ENCODE measurements at regions of chr14 and their contacts with region 1.

Region 1: GRCh38 chr14:51283402-51284085 is 43.5 kb downstream of the TMX1 start:
- DNase-seq: peak; percentile 67

Region 2: DNA sequence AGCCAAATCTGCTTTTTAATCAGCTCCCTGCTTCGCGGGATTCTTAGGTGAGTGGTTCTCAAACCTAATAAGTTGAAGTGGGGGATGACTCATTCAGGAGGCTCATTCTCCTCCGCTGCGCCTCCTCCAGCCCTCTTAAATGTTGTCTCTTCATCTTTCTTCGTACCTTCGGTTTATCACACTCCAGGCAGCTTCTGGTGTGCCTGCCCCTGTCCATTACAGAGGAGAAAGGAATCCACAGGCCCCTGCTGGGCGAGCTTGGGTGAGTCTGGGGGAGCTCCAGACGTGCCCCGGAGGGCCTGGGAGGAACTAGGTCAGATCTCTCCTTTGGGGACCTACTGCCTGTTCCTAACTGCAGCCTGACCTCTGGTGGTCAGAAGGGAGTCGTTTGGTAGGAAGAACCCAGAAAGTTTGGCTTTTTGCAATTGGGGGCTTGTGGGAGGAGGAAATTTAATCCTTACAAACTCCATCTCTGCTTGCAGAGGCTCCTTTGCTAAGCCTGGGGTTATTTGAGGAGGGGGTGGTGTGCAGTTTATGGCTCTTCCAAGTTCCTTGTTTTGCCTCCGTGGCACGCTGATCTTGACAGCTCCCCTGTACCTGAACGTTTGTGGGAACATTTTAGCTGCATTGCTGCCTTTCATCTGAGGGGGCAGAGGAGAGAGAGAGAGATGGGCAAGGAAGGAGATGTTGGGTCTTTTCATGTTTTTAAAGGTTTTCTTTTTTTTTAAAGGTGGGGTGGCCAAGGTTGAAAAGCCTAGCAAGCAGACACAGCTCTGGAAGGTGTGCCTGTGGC is 492.8 kb after region 1 on chr14:
- CTCF ChIA-PET with region 1: interaction called, 27 read pairs
- POLR2A ChIA-PET with region 1: interaction called, 4 read pairs
- DNase-seq: peak; percentile 70

Measured in HEK293T (cell line).